HCT116 (cell line): ENCODE measurements at regions of chr11 and their contacts with region 1.

Region 1: GRCh38 chr11:8566613-8567210 is 27.3 kb downstream of the STK33 start:
- DNase-seq: peak; percentile 23
- ATAC-seq: peak; percentile 87
- H3K4me3 ChIP-seq: no peak overlapping the region
- H3K27ac ChIP-seq: no peak overlapping the region
- H3K4me1 ChIP-seq: peaks cover 14 to 17% of the 10 kb centered on the region in 2 experiments
- H3K27me3 ChIP-seq: no peaks in the 10 kb centered on the region
- CTCF ChIP-seq: peak; percentile 28 to 86 (median 75)
- POLR2A ChIP-seq: no peak
- RAD21 ChIP-seq: peak; percentile 88

Region 2: DNA sequence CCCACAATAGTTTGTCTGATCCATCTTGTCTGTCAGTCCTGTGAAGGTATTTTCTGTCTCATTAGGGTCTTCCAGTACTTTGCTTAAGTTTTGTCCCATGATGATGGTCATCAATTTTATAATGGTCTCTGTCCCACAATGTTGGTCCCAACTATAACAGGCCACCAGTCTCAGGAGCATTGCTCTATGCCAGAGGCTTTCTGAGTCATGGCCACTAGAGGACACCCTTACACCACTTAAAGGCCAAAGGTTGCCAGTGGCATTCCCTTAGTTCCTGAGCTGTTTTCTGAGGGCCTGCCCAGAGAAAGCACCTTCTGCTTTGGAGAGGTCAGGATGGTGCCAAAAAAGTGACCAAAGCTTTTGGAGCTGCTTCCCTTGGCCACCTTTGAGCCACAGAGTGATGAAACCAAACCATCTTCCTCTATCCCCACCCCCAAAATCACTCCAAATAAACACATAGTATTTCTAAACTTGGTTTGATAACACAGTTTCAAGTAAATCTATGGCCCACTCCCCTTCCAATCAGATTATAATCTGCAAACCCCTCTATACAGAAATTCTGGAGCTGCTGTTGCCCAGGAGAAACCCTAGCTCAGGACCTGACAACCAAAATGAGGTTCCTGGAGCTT is 560.2 kb before region 1 on chr11:
- CTCF ChIA-PET with region 1: no interaction called
- POLR2A ChIA-PET with region 1: no interaction called
- RAD21 ChIA-PET with region 1: no interaction called
- intact Hi-C with region 1: loop called (anchors 5 kb)
- DNase-seq: peak; percentile 54
- ATAC-seq: peak; percentile 97
- H3K4me3 ChIP-seq: no peak overlapping the region
- H3K27ac ChIP-seq: no peak overlapping the region
- H3K4me1 ChIP-seq: no peaks in the 10 kb centered on the region
- H3K27me3 ChIP-seq: no peaks in the 10 kb centered on the region
- CTCF ChIP-seq: peak; percentile 86 to 91 (median 91)
- POLR2A ChIP-seq: no peak
- RAD21 ChIP-seq: peak; percentile 96

Region 3: DNA sequence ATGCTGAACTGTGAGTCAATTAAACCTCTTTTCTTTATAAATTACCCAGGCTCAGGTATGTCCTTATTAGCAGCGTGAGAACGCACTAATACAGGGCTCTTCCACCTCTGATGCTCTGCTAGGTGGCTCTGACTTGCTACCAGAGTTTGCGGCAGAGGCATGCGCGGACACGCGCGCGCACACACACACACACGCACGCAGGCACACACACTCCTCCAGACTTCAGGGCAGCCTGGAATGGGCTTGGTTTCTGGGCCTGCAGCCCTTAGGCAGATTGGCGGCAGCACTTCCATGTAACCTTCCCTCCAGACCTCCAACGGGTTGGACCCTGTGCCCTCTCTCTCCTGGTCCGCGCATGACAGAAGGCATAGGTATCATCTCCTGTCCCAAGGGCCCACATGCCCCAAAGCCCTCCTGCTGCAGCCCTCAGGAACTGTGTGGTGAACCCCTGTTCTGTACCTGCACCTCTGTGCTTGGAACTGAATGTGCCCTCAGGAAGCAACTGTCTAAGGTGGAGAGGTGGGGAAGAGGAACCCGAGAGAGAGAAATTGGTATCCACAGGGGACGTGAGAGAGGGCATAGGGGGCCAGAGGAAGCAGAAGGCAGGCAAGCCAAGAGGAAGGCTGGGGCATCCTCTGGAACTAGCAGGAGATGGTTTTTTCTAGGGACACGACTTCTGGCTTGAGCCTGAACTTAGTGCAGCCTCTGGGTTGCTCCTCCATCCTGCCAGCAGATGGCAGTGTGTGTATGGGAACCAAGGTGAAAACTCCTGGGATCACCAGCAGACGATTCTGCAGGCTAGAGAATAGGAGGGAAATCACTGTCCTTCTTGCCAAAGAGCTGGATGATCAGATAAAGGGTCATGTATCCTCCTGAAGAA is 374.5 kb before region 1 on chr11:
- CTCF ChIA-PET with region 1: interaction called, 12 read pairs
- POLR2A ChIA-PET with region 1: no interaction called
- RAD21 ChIA-PET with region 1: no interaction called
- intact Hi-C with region 1: loop called (anchors 1 kb)
- DNase-seq: peak; percentile 41
- ATAC-seq: peak; percentile 96
- H3K4me3 ChIP-seq: no peak overlapping the region
- H3K27ac ChIP-seq: no peak overlapping the region
- H3K4me1 ChIP-seq: no peaks in the 10 kb centered on the region
- H3K27me3 ChIP-seq: peaks cover 14% of the 10 kb centered on the region; the same call in 1 of the 2 replicates
- CTCF ChIP-seq: peak; percentile 71 to 90 (median 82)
- POLR2A ChIP-seq: no peak
- RAD21 ChIP-seq: peak; percentile 82

Region 4: DNA sequence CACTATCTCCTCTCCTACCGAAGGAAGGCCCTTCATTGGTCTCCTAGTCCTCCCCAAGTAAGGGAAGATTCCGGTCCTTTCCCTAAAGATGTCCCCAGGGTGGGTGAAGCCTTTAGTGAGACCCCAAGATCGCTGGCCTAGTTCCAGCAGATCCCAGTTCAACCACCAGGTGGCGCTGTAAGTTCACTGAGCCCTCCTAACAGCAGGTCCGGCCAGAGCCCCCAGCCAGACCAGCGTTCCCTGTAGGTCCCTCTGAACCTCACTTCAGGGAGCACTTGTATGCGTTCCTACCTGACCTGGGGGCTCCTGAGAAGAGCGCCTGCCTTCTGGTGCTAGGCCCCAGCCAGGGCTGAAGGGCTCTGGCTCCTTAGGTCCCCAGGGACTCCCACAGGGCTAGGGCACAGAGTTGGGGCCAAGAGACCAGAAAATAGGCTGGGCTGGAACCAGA is 341.1 kb before region 1 on chr11:
- CTCF ChIA-PET with region 1: interaction called, 27 read pairs
- POLR2A ChIA-PET with region 1: interaction called, 4 read pairs
- RAD21 ChIA-PET with region 1: no interaction called
- intact Hi-C with region 1: loop called (anchors 1 kb)
- DNase-seq: peak; percentile 42
- ATAC-seq: peak; percentile 88
- H3K4me3 ChIP-seq: no peak overlapping the region
- H3K27ac ChIP-seq: no peak overlapping the region
- H3K4me1 ChIP-seq: peaks cover 0 to 3% of the 10 kb centered on the region in 2 experiments; a peak in 1 of 4 replicates
- H3K27me3 ChIP-seq: no peaks in the 10 kb centered on the region
- CTCF ChIP-seq: peak; percentile 89 to 95 (median 92)
- POLR2A ChIP-seq: no peak
- RAD21 ChIP-seq: peak; percentile 96

Region 5: DNA sequence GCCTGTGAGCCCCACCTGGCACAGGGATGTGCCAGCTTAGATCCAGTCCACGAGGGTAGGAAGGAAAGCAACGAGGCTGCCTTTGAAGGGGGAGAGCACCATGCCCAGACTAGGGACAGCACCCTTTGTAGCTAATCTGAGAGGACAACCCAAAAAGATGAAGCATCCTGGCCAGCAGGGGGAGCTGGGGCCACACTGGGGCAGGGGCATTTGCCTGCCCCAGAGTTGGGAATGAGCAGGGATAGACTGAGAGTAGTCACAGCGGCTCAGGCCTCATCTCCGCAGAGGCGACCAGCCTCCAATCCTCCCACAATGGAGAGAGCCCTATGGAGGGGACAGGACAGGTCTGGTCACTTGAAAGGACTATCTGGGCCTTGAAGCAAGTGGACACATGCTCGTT is 319.4 kb before region 1 on chr11:
- CTCF ChIA-PET with region 1: interaction called, 17 read pairs
- POLR2A ChIA-PET with region 1: no interaction called
- RAD21 ChIA-PET with region 1: interaction called, 4 read pairs
- intact Hi-C with region 1: loop called (anchors 1 kb)
- DNase-seq: no peak
- ATAC-seq: peak; percentile 91
- H3K4me3 ChIP-seq: no peak overlapping the region
- H3K27ac ChIP-seq: no peak overlapping the region
- H3K4me1 ChIP-seq: peaks cover 0 to 11% of the 10 kb centered on the region in 2 experiments; a peak in 2 of 4 replicates
- H3K27me3 ChIP-seq: no peaks in the 10 kb centered on the region
- CTCF ChIP-seq: peak; percentile 63 to 81 (median 72); a peak in 5 of 6 replicates
- POLR2A ChIP-seq: no peak
- RAD21 ChIP-seq: peak; percentile 78

Region 6: DNA sequence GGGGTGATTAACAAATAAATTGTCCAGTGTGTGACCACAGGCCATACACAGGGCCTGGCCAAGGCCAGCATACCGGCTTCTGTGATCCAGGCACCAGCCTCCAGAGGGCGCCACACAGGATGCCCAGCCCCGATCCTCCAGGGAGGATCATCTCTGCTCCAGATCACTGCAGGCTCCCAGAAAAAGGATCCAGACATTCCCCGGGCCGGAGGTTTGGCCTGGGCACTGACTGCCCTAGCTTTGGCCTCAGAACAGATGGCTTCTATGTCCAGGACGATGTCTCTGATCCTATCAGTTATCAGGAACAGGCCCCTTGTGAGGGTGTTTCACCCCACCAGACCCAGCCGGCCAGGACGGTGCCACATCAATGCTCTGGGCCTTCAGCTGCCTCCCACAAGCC is 228.6 kb before region 1 on chr11:
- CTCF ChIA-PET with region 1: interaction called, 9 read pairs
- POLR2A ChIA-PET with region 1: no interaction called
- RAD21 ChIA-PET with region 1: no interaction called
- intact Hi-C with region 1: loop called (anchors 2 kb)
- DNase-seq: peak; percentile 31
- ATAC-seq: peak; percentile 90
- H3K4me3 ChIP-seq: no peak overlapping the region
- H3K27ac ChIP-seq: no peak overlapping the region
- H3K4me1 ChIP-seq: peaks cover 0 to 33% of the 10 kb centered on the region in 2 experiments; a peak in 3 of 4 replicates
- H3K27me3 ChIP-seq: no peaks in the 10 kb centered on the region
- CTCF ChIP-seq: peak; percentile 61 to 96 (median 93)
- POLR2A ChIP-seq: no peak
- RAD21 ChIP-seq: peak; percentile 56

Region 7: GRCh38 chr11:8964324-8965320 is 397.9 kb after region 1 on chr11 and contains the start of gene TMEM9B:
- CTCF ChIA-PET with region 1: interaction called, 11 read pairs
- POLR2A ChIA-PET with region 1: no interaction called
- RAD21 ChIA-PET with region 1: no interaction called
- intact Hi-C with region 1: no loop called
- DNase-seq: peak; percentile 78
- ATAC-seq: peak; percentile 86
- H3K4me3 ChIP-seq: peak within 1 kb of the TSS; percentile 85 to 88
- H3K27ac ChIP-seq: peak within 1 kb of the TSS; percentile 97
- H3K4me1 ChIP-seq: peaks cover 10 to 25% of the 10 kb centered on the region in 2 experiments
- H3K27me3 ChIP-seq: no peaks in the 10 kb centered on the region
- CTCF ChIP-seq: no peak
- POLR2A ChIP-seq: peak; percentile 66
- RAD21 ChIP-seq: no peak
- total RNA-seq, gene TMEM9B: 26.8 TPM

Region 8: GRCh38 chr11:9170450-9170849 is 603.7 kb after region 1 on chr11:
- CTCF ChIA-PET with region 1: no interaction called
- POLR2A ChIA-PET with region 1: no interaction called
- RAD21 ChIA-PET with region 1: no interaction called
- intact Hi-C with region 1: no loop called
- DNase-seq: no peak
- ATAC-seq: no peak
- H3K4me3 ChIP-seq: no peak overlapping the region
- H3K27ac ChIP-seq: no peak overlapping the region
- H3K4me1 ChIP-seq: peaks cover 0 to 17% of the 10 kb centered on the region in 2 experiments; a peak in 2 of 4 replicates
- H3K27me3 ChIP-seq: no peaks in the 10 kb centered on the region
- CTCF ChIP-seq: no peak
- POLR2A ChIP-seq: no peak
- RAD21 ChIP-seq: no peak